Lower leg skin (tissue), 4 donors: ENCODE measurements at regions of chr4 and their contacts with region 1.

Region 1: GRCh38 chr4:96136056-96136455 is 296.2 kb downstream of the PDHA2 start:
- DNase-seq: no peak
- H3K4me3 ChIP-seq: no peak overlapping the region
- CTCF ChIP-seq: no peak
- POLR2A ChIP-seq: no peak

Region 2: GRCh38 chr4:96375367-96375766 is 239.3 kb after region 1 on chr4:
- intact Hi-C with region 1: loop called (anchors 5 kb)
- DNase-seq: no peak
- H3K4me3 ChIP-seq: no peak overlapping the region
- CTCF ChIP-seq: no peak
- POLR2A ChIP-seq: no peak

Region 3: GRCh38 chr4:96879527-96879926 is 743.5 kb after region 1 on chr4:
- intact Hi-C with region 1: no loop called
- DNase-seq: no peak
- H3K4me3 ChIP-seq: no peak overlapping the region
- CTCF ChIP-seq: no peak
- POLR2A ChIP-seq: no peak